ENCODE measurements at regions of chr10 and their contacts with region 1.

Region 1: DNA sequence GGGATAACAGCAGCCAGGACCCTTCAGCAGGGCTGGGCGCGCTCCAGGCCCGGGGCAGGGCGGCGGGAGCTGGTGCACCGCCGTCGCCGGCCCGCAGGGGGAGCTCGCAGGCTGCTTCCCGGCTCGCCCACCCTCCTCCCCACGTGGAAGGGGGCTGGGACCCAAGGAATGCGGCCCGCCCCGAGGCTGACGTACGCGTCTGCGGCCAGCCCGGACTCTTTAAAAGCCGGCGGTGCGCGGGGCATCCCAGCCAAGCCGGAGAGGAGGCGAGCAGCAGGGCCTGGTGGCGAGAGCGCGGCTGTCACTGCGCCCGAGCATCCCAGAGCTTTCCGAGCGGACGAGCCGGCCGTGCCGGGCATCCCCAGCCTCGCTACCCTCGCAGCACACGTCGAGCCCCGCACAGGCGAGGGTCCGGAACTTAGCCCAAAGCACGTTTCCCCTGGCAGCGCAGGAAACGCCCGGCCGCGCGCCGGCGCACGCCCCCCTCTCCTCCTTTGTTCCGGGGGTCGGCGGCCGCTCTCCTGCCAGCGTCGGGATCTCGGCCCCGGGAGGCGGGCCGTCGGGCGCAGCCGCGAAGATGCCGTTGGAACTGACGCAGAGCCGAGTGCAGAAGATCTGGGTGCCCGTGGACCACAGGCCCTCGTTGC is at the start of gene PFKFB3:
- DNase-seq: peak; percentile 96
- H3K4me3 ChIP-seq: peak within 1 kb of the TSS; percentile 75 to 81
- H3K27ac ChIP-seq: peak within 1 kb of the TSS; percentile 90 to 91
- H3K4me1 ChIP-seq: peaks cover 26% of the 10 kb centered on the region
- H3K27me3 ChIP-seq: no peaks in the 10 kb centered on the region
- CTCF ChIP-seq: peak; percentile 97 to 99 (median 99)
- POLR2A ChIP-seq: peak; percentile 97
- total RNA-seq, gene PFKFB3: 53.9 to 65.3 TPM

Region 2: DNA sequence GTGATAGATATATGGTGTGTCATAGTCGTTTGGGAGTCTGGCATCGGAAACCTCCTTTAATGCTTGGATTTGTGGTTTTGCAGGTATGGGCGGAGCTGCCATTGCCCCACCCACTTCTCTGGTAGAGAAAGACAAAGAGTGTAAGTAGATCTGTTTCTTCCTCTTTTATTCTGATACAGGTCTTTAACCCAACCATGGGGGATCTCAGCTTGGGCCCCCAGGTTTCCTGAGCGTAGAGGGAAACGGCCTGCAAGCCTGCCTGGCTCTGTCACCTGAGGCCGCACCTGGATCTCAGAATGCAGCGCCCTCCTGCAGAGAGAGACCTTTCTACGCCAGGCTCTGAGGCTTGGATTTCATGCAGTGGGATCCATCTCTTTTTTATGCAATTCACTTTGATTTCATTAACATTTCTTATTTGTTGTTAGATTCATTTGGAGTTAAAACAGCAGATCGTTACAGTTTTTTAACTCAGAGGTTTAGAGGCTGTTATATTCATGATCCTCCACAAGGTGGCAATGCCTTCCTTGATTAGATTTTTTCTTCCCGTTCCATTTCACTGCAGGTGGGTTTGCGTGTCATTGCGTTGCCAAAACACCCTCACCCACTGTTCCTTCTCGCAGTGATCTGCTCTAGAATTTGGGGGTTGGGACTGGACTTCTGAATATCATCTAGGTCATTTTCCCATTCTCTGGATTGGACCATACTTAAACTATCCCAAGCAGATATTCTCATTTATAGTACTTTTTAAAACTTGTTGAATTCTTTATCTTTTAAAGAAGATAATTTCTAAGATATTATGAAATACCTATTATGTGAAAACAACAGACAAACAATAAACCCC is 94.0 kb before region 1 on chr10:
- intact Hi-C with region 1: no loop called
- DNase-seq: no peak
- H3K4me3 ChIP-seq: no peak overlapping the region
- H3K27ac ChIP-seq: no peak overlapping the region
- H3K4me1 ChIP-seq: no peaks in the 10 kb centered on the region
- H3K27me3 ChIP-seq: no peaks in the 10 kb centered on the region
- CTCF ChIP-seq: peak; percentile 71 to 79 (median 79)
- POLR2A ChIP-seq: no peak

Region 3: GRCh38 chr10:6163364-6164270 is 39.2 kb before region 1 on chr10:
- intact Hi-C with region 1: loop called (anchors 5 kb)
- DNase-seq: peak; percentile 91
- H3K4me3 ChIP-seq: peak overlapping the region; percentile 82 to 95
- H3K27ac ChIP-seq: peak overlapping the region; percentile 93 to 96
- H3K4me1 ChIP-seq: peaks cover 43% of the 10 kb centered on the region
- H3K27me3 ChIP-seq: no peaks in the 10 kb centered on the region
- CTCF ChIP-seq: peak in 1 of 3 experiments; percentile 8
- POLR2A ChIP-seq: peak; percentile 2

Region 4: DNA sequence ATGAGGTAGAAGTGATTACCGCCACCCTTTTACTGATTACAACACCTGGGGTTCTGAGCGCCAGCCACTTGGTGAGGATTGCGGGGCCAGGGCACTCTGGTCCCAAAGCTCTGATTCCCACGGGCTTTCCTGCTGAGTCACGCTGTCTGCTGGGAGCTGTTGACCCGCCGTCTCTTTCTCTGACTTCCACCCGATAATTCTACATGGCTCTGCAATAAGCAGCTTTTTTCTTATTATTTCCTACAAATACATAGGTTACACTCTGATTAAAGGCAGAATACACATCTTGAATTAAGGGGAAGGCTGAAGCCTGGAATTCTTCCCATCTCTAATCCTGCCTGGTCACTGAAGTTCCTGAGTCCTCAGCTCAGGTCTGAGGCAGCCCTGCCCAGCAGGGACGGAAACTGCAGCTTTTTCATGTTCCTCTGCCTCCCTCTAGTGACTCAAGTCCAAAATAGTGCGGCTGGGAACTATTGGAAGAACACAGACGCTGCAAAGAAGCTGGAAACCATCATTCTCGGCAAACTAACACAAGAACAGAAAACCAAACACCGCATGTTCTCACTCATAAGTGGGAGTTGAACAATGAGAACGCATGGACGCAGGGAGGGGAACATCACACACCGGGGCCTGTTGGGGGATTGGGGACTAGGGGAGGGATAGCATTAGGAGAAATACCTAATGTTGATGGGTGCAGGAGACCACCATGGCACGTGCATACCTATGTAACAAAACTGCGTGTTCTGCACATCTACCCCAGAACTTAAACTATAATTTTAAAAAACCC is 198.9 kb after region 1 on chr10:
- intact Hi-C with region 1: loop called (anchors 10 kb)
- DNase-seq: peak; percentile 87
- H3K4me3 ChIP-seq: no peak overlapping the region
- H3K27ac ChIP-seq: no peak overlapping the region
- H3K4me1 ChIP-seq: peaks cover 3% of the 10 kb centered on the region
- H3K27me3 ChIP-seq: no peaks in the 10 kb centered on the region
- CTCF ChIP-seq: peak; percentile 68 to 77 (median 75)
- POLR2A ChIP-seq: no peak

Region 5: GRCh38 chr10:6498771-6499170 is 296.0 kb after region 1 on chr10:
- intact Hi-C with region 1: no loop called
- DNase-seq: no peak
- H3K4me3 ChIP-seq: no peak overlapping the region
- H3K27ac ChIP-seq: no peak overlapping the region
- H3K4me1 ChIP-seq: no peaks in the 10 kb centered on the region
- H3K27me3 ChIP-seq: no peaks in the 10 kb centered on the region
- CTCF ChIP-seq: no peak
- POLR2A ChIP-seq: no peak

Measured in testis (tissue), 5 donors.